Ascending aorta (tissue), 2 donors: ENCODE measurements at regions of chr10 and their contacts with region 1.

Region 1: DNA sequence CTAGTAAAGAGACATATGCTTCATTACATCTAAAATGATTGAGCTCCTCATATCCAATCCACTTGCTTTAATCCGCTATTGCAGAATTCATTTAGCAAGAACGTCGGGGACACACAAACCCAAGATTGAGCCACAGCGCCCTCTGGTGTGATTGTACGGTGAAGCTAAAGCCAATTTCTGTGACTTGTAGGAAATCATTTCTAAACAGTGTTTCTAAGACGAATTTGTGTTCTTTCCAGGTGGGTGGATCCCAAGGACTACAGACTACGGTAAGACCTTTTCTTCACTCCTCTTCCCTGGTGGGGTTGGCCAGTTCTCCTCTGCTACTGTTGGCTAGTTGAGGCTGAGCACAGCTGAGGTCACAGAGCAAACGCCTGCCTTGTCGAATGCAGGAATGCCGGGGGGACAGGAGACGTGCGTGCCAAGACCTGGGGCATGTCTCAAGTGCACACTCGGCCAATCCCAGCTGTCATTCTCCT is 5.2 kb downstream of the DMBT1 start:
- DNase-seq: peak in 1 of 2 donors; percentile 87
- H3K4me3 ChIP-seq: peak overlapping the region; percentile 4 to 49
- H3K27ac ChIP-seq: no peak overlapping the region
- H3K4me1 ChIP-seq: no peaks in the 10 kb centered on the region
- H3K27me3 ChIP-seq: no peaks in the 10 kb centered on the region
- CTCF ChIP-seq: peak; percentile 70 to 88 (median 79)

Region 2: GRCh38 chr10:122342293-122343134 is 223.3 kb before region 1 on chr10:
- intact Hi-C with region 1: loop called (anchors 2 kb)
- DNase-seq: no peak
- H3K4me3 ChIP-seq: no peak overlapping the region
- H3K27ac ChIP-seq: no peak overlapping the region
- H3K4me1 ChIP-seq: no peaks in the 10 kb centered on the region
- H3K27me3 ChIP-seq: no peaks in the 10 kb centered on the region
- CTCF ChIP-seq: peak; percentile 60 to 82 (median 69)

Region 3: GRCh38 chr10:122618461-122619165 is 52.8 kb after region 1 on chr10:
- intact Hi-C with region 1: no loop called
- DNase-seq: no peak
- H3K4me3 ChIP-seq: no peak overlapping the region
- H3K27ac ChIP-seq: no peak overlapping the region
- H3K4me1 ChIP-seq: no peaks in the 10 kb centered on the region
- H3K27me3 ChIP-seq: no peaks in the 10 kb centered on the region
- CTCF ChIP-seq: no peak